ENCODE measurements at regions of chrX and their contacts with region 1.

Region 1: GRCh38 chrX:40266490-40267333 is 169.0 kb upstream of the BCOR start:
- DNase-seq: peak; percentile 12
- ATAC-seq: peak; percentile 45
- H3K4me3 Mint-ChIP-seq: peak overlapping the region; percentile 72
- H3K27ac Mint-ChIP-seq: no peak overlapping the region
- H3K4me1 Mint-ChIP-seq: peaks cover 14% of the 10 kb centered on the region
- H3K27me3 Mint-ChIP-seq: no peaks in the 10 kb centered on the region
- CTCF ChIP-seq: no peak

Region 2: DNA sequence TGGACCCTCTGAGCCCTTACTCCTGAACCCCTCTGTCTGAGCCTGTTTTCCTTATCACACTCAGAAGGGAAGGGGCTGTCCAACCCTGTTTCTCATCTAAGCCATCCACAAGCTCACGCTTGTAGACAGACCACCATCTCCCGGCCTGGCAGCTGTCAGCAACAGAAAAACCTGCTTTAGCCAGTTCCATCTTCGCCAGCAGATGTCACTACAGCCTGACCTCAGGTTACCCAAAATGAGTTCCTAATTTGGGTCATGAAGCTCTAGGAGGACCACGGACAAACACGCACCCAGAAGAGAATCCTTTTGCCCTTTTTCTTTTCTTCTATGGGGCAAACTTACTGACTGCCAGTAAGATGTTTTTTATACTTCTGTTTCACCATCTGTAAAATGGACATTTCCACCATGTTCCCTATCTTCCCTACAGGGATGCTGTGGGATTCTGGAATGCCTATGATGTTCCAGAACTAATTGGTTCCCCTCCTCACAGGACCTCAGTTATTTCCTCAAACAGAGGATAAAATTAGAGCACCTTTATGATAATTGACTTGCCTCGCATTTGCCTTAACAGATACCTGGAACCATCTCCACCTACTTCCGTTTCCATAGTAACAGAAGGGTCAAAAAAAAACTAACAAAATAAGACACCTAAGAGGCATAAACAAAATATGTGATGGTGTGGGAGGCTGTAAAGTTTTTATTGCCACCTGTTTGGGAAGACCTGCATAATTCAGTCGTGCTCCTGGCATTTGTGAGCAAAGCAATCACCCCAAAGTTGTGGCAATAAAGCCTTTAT is 614.2 kb before region 1 on chrX:
- CTCF ChIA-PET with region 1: no interaction called
- POLR2A ChIA-PET with region 1: no interaction called
- intact Hi-C with region 1: loop called (anchors 5 kb)
- DNase-seq: no peak
- ATAC-seq: no peak
- H3K4me3 Mint-ChIP-seq: no peak overlapping the region
- H3K27ac Mint-ChIP-seq: no peak overlapping the region
- H3K4me1 Mint-ChIP-seq: no peaks in the 10 kb centered on the region
- H3K27me3 Mint-ChIP-seq: peaks cover 13% of the 10 kb centered on the region
- CTCF ChIP-seq: no peak

Region 3: DNA sequence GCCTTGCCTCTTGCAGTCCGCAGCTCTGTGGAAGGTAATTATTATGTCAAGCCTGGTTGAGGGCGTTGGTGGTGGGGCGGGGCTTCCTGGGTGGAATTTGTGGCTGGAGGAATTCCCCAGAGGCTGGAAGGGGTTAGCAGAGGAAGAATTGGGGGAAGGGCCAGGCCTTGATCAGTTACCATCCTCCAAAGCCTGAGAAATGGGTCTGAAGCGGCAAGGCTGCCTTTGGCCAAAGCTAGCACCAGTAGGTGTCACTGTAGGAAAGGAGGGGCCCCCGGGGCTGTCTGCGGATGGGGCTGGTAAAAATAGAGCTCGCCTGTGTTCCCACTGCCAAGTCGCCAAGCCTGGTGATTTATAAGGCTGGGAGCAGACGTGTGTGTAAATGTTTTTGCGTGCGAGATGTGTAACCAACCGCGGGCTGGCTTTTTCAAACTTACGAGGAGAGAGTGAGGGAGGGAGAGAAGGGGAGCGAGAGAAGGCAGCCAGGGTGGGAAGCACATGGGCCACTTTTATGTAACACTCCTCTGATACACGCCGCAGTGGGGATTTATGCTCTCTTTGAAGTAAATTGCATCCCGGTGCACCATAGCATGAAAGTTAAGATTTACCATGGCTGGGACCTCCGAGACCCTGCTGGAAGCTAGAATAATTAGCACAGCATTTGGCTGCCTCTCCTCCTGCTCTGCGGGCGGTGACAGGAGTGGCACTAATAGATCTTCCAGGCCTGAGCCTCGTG is 535.9 kb before region 1 on chrX:
- CTCF ChIA-PET with region 1: no interaction called
- POLR2A ChIA-PET with region 1: no interaction called
- intact Hi-C with region 1: loop called (anchors 5 kb)
- DNase-seq: no peak
- ATAC-seq: peak; percentile 64
- H3K4me3 Mint-ChIP-seq: peak overlapping the region; percentile 53
- H3K27ac Mint-ChIP-seq: no peak overlapping the region
- H3K4me1 Mint-ChIP-seq: peaks cover 5% of the 10 kb centered on the region
- H3K27me3 Mint-ChIP-seq: peaks cover 8% of the 10 kb centered on the region
- CTCF ChIP-seq: no peak

Region 4: DNA sequence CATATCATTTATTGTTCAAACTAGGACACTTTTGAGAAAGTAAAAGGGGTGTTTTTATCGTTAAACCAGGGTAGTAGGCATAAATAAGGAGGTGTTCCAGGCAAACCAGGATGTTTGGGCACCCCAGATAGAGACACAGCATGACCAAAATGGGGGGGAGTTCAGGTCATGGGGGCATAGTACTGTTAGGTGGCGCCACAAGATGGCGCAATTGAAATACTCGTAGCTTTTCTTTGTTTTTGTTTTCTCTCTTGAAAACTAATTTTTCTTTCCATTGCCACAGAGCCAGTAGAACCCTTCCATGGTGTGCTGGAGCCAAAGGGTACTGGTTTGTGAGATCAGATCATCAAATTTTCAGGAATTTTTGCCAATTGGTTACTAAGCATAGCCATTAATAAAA is 452.3 kb before region 1 on chrX:
- CTCF ChIA-PET with region 1: no interaction called
- POLR2A ChIA-PET with region 1: no interaction called
- intact Hi-C with region 1: loop called (anchors 1 kb)
- DNase-seq: no peak
- ATAC-seq: no peak
- H3K4me3 Mint-ChIP-seq: no peak overlapping the region
- H3K27ac Mint-ChIP-seq: no peak overlapping the region
- H3K4me1 Mint-ChIP-seq: peaks cover 8% of the 10 kb centered on the region
- H3K27me3 Mint-ChIP-seq: peaks cover 11% of the 10 kb centered on the region
- CTCF ChIP-seq: no peak

Region 5: DNA sequence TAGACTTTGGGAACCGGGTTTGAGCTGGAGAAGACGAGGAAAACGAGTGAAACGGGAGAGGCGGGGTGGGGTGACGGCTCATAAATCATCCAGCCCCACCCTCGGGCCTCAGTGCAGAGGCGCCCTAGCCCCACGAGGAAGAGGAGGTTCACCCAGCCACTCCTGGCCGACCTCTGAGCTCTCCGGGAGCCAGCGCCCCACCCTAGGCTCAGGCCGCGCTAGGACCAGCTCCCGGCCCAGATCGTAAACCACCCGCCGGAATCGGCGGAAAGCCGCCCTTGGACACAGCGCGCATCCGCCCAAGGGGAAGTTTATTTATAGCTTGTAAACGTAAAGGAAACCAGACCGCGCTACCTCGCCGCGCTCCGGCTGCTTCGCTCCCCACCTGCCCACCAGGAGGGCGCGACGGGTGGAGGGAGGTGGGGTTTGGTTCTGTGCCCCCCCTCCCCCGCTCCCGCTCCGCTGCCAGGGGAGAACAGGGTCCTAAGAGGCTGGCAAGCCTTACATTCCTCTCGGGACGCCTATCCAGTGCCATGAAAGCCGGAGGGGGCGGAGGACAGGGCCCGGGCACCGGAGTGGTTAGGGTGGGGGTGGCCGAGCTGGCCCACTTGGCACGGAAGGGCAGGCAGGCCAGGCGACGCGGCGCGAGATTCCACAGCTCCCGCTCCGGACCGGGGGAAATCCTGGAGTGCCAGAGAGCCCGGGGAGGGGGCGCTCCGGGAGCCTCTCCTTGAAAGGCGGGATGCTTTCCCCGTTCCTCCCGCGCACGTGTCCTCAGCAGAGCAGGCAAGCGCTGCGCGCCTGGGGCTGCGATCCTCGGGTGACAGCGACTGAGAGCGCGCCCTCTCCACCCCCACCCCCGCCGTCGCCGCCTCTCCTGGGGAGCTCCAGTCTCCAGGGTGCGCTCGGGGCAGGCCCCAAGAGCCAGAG is 253.2 kb before region 1 on chrX:
- CTCF ChIA-PET with region 1: no interaction called
- POLR2A ChIA-PET with region 1: no interaction called
- intact Hi-C with region 1: loop called (anchors 10 kb)
- DNase-seq: peak; percentile 41
- ATAC-seq: peak; percentile 47
- H3K4me3 Mint-ChIP-seq: peak overlapping the region; percentile 76
- H3K27ac Mint-ChIP-seq: peak overlapping the region; percentile 56
- H3K4me1 Mint-ChIP-seq: peaks cover 26% of the 10 kb centered on the region
- H3K27me3 Mint-ChIP-seq: no peaks in the 10 kb centered on the region
- CTCF ChIP-seq: no peak